ENCODE measurements at regions of chr17 and their contacts with region 1.

Region 1: DNA sequence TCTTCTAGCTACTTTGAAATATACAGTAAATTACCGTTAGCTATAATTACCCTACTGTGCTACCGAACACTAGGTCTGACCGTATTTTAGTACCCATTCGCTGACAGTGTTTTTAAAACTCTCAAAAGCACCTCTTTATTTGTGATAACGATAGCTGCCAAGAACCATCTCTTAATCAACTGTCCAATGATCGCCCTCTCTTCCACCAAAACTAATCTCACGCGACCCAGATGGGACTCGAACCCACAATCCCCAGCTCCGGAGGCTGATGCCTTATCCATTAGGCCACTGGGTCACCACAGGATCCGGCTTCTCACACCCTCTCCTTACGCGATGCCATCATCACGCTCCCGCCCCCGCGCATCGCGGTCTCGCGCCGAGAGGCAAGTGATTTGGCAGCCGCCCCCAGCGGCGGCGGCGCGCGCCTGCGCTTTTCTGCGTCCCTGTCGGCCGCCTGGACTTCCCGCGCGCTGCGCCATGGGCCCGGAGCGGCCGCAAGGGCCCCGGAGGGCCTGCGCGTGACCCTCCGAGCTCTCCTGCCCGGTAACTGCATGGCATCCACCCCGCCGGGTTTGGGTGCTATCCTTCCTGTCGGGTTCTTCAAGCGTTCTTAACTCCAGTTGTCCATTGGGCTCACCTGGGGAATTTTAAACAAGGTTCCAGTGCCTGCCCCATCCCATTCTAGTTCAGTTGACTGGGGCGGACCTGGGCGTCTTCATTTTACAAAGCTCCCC is 15.7 kb upstream of the KPNA2 start:
- DNase-seq: peak; percentile 94
- H3K4me3 ChIP-seq: peak overlapping the region; percentile 47 to 49
- H3K27ac ChIP-seq: peak overlapping the region; percentile 83 to 90
- H3K4me1 ChIP-seq: no peaks in the 10 kb centered on the region
- H3K27me3 ChIP-seq: no peaks in the 10 kb centered on the region
- CTCF ChIP-seq: peak; percentile 34 to 81 (median 56)
- POLR2A ChIP-seq: peak; percentile 41

Region 2: DNA sequence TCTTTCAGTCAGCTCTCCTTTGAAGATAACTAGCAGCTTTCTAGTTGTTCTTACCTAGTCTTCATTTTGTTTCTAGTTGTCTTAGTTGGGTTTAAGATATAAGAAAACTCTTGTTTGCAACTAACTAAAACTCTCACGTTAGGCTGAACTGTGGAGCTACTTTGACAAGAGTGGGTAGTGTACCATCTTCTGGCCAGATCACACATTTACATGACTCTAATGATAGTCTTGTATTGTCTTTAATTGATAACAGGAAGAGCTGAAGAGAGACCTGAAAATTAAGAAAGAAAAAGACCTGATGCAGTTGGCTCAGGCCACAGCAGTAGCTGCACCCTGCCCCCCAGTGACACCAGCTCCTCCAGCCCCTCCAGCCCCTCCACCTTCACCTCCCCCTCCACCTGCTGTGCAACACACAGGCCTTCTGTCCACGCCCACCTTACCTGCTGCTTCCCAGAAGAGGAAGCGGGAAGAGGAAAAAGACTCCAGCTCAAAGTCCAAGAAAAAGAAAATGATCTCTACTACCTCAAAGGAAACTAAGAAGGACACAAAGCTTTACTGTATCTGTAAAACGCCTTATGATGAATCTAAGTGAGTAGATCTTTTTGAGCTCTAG is 60.4 kb before region 1 on chr17:
- intact Hi-C with region 1: loop called (anchors 10 kb)
- DNase-seq: no peak
- H3K4me3 ChIP-seq: no peak overlapping the region
- H3K27ac ChIP-seq: no peak overlapping the region
- H3K4me1 ChIP-seq: no peaks in the 10 kb centered on the region
- H3K27me3 ChIP-seq: no peaks in the 10 kb centered on the region
- CTCF ChIP-seq: no peak
- POLR2A ChIP-seq: no peak

Region 3: DNA sequence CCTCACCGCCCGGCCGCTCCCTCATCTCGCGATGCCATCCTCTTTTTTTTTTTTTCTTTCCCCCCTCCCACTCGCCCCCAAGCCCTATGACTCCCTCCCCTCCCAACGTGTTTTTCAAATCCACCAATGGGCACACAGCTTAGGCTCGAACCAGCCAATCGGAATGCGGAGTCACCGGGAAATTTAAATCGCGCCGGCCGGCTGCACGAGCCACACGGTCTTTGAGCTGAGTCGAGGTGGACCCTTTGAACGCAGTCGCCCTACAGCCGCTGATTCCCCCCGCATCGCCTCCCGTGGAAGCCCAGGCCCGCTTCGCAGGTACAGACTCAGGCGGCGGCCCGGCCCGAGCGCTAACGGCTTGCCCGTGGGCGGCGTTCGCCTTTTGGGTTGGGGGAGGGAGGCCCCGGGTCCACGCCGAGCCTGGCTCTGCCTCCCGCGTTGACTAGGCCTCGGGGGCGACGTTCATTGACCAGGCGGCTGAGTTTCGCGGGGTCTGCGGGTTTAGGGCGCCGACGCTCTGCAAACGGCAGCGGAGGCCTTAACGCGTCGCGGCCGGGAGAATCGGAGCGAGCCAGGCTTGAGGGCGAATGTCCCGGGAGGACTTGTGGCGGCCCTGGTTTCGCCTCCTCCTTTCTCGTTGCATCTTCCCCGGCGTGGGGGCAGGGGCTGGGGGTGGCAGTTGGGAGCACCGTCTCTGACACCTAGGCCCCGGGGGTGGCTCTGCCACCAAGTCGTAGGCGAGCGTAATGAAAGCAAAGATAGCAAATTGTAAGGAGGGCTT is 15.9 kb after region 1 on chr17 and contains the start of gene KPNA2:
- intact Hi-C with region 1: no loop called
- DNase-seq: peak; percentile 92
- H3K4me3 ChIP-seq: peak within 1 kb of the TSS; percentile 85 to 91
- H3K27ac ChIP-seq: peak within 1 kb of the TSS; percentile 67 to 69
- H3K4me1 ChIP-seq: no peaks in the 10 kb centered on the region
- H3K27me3 ChIP-seq: no peaks in the 10 kb centered on the region
- CTCF ChIP-seq: no peak
- POLR2A ChIP-seq: peak; percentile 30
- total RNA-seq, gene KPNA2: 13.4 to 68.4 TPM

Region 4: GRCh38 chr17:68103148-68103547 is 83.3 kb after region 1 on chr17:
- intact Hi-C with region 1: no loop called
- DNase-seq: no peak
- H3K4me3 ChIP-seq: peak overlapping the region; percentile 72 to 90
- H3K27ac ChIP-seq: peak overlapping the region in 1 of 2 donors; percentile 92
- H3K4me1 ChIP-seq: peaks cover 4% of the 10 kb centered on the region
- H3K27me3 ChIP-seq: no peaks in the 10 kb centered on the region
- CTCF ChIP-seq: no peak
- POLR2A ChIP-seq: no peak

Measured in prostate gland (tissue), 2 donors.